Adrenal gland (tissue), 19 donors: ENCODE measurements at regions of chr4 and their contacts with region 1.

Region 1: GRCh38 chr4:89024051-89024675 is 32.8 kb downstream of the FAM13A start:
- DNase-seq: peak; percentile 45 to 83 (median 65)
- H3K4me3 ChIP-seq: no peak overlapping the region
- H3K27ac ChIP-seq: no peak overlapping the region
- H3K4me1 ChIP-seq: peaks cover 0 to 20% of the 10 kb centered on the region in 2 donors
- H3K27me3 ChIP-seq: no peaks in the 10 kb centered on the region
- CTCF ChIP-seq: peak; percentile 68 to 95 (median 92)
- POLR2A ChIP-seq: no peak

Region 2: GRCh38 chr4:88706574-88706973 is 317.6 kb before region 1 on chr4:
- intact Hi-C with region 1: loop called (anchors 5 to 10 kb)
- DNase-seq: peak; percentile 39 to 74 (median 49)
- H3K4me3 ChIP-seq: no peak overlapping the region
- H3K27ac ChIP-seq: peak overlapping the region in 1 of 5 donors; percentile 45
- H3K4me1 ChIP-seq: peaks cover 0 to 9% of the 10 kb centered on the region in 2 donors
- H3K27me3 ChIP-seq: no peaks in the 10 kb centered on the region
- CTCF ChIP-seq: peak; percentile 53 to 81 (median 70)
- POLR2A ChIP-seq: no peak